ENCODE measurements at regions of chr20 and their contacts with region 1.

Region 1: GRCh38 chr20:34350095-34350494 is 13.0 kb upstream of the ITCH start:
- DNase-seq: no peak
- ATAC-seq: no peak
- H3K4me3 ChIP-seq: no peak overlapping the region
- H3K27ac ChIP-seq: peak overlapping the region; percentile 4; the same call in 1 of the 2 replicates
- H3K4me1 ChIP-seq: peaks cover 19 to 43% of the 10 kb centered on the region in 2 experiments
- H3K27me3 ChIP-seq: no peaks in the 10 kb centered on the region
- CTCF ChIP-seq: no peak
- POLR2A ChIP-seq: no peak
- RAD21 ChIP-seq: no peak

Region 2: GRCh38 chr20:33984182-33984719 is 365.8 kb before region 1 on chr20:
- CTCF ChIA-PET with region 1: no interaction called
- POLR2A ChIA-PET with region 1: no interaction called
- RAD21 ChIA-PET with region 1: no interaction called
- intact Hi-C with region 1: no loop called
- DNase-seq: no peak
- ATAC-seq: no peak
- H3K4me3 ChIP-seq: no peak overlapping the region
- H3K27ac ChIP-seq: no peak overlapping the region
- H3K4me1 ChIP-seq: no peaks in the 10 kb centered on the region
- H3K27me3 ChIP-seq: no peaks in the 10 kb centered on the region
- CTCF ChIP-seq: no peak
- POLR2A ChIP-seq: no peak
- RAD21 ChIP-seq: no peak

Region 3: GRCh38 chr20:34363062-34363464 is 13.0 kb after region 1 on chr20 and contains the start of gene ITCH:
- CTCF ChIA-PET with region 1: interaction called, 4 read pairs
- POLR2A ChIA-PET with region 1: interaction called, 12 read pairs
- RAD21 ChIA-PET with region 1: interaction called in 1 of 2 experiments, 3 read pairs
- intact Hi-C with region 1: no loop called
- DNase-seq: peak; percentile 88
- ATAC-seq: peak; percentile 97
- H3K4me3 ChIP-seq: peak within 1 kb of the TSS; percentile 86 to 87
- H3K27ac ChIP-seq: peak within 1 kb of the TSS; percentile 82
- H3K4me1 ChIP-seq: peaks cover 22 to 62% of the 10 kb centered on the region in 2 experiments
- H3K27me3 ChIP-seq: no peaks in the 10 kb centered on the region
- CTCF ChIP-seq: no peak
- POLR2A ChIP-seq: peak; percentile 79
- RAD21 ChIP-seq: no peak
- total RNA-seq, gene ITCH: 78.8 TPM

Region 4: DNA sequence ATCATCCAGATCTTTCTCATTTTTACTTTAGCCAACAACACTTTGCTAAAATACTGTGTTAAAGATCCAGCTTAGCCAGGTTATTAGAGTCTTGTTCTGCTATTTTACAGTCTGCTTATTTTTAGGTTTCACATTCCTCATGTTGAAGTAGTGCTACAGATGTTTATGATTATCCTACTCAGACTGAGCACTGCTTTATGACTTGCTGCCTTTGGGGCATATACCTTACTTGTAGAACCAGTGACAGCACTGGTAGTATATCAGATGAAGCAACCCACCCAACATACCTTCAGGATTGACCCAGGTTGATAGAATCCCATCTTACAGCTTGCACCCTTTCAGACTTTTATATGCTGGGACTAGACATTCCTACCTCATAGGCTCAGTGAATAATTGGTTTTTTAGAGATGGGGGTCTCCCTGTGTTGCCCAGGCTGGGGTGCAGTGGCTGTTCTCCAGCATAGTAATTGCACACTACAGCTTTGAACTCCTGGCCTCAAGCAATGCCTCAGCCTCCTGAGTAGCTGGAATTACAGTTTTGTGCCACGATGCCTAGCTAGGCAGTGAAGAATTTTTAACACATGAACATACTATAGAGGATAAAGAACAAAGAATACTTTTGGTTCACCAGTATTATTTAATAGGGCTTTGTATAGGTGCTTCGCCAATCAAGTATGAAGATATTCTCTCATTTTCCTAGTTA is 102.3 kb after region 1 on chr20:
- CTCF ChIA-PET with region 1: no interaction called
- POLR2A ChIA-PET with region 1: no interaction called
- RAD21 ChIA-PET with region 1: no interaction called
- intact Hi-C with region 1: no loop called
- DNase-seq: no peak
- ATAC-seq: no peak
- H3K4me3 ChIP-seq: no peak overlapping the region
- H3K27ac ChIP-seq: no peak overlapping the region
- H3K4me1 ChIP-seq: no peaks in the 10 kb centered on the region
- H3K27me3 ChIP-seq: no peaks in the 10 kb centered on the region
- CTCF ChIP-seq: no peak
- POLR2A ChIP-seq: no peak
- RAD21 ChIP-seq: no peak

Region 5: DNA sequence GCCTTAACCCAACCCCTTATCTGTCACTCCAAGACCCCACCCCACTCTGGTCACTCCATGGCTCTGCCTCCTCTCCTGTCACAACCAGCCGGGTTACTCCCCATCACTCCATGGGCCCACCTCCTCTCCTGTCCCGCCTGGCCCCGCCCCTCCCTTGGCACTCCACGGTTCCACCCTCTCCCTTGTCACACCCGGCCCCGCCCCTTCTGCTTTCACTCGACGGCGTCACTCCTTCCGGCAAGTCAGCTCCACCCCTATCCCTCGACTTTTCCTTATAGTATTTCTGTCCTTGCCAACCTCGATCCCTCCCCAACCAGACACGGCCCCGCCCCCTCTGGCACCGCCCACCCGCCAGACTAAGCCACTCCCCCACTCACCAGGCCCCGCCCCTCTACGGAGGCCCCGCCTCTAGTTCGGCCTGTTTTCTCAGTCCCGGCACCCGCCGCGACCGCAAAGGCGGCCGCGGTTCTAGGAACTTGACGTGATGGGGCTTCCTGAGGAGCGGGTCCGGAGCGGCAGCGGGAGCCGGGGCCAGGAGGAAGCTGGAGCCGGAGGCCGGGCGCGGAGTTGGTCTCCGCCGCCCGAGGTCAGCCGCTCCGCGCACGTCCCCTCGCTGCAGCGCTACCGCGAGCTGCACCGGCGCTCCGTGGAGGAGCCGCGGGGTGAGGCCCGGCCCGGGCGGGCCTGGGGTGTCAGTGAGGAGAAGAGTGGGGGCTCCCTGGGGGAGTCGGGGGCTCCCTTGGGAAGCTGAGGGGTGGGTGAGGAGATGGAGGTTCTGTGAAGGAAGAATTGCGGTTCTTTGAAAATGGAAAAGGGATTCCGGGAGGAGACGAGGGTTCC is 526.3 kb after region 1 on chr20 and contains the start of gene ACSS2:
- CTCF ChIA-PET with region 1: no interaction called
- POLR2A ChIA-PET with region 1: no interaction called
- RAD21 ChIA-PET with region 1: no interaction called
- intact Hi-C with region 1: no loop called
- DNase-seq: peak; percentile 98
- ATAC-seq: peak; percentile 90
- H3K4me3 ChIP-seq: peak within 1 kb of the TSS; percentile 76 to 80
- H3K27ac ChIP-seq: peak within 1 kb of the TSS; percentile 57
- H3K4me1 ChIP-seq: peaks cover 23 to 50% of the 10 kb centered on the region in 2 experiments
- H3K27me3 ChIP-seq: no peaks in the 10 kb centered on the region
- CTCF ChIP-seq: no peak
- POLR2A ChIP-seq: peak; percentile 31
- RAD21 ChIP-seq: no peak
- total RNA-seq, gene ACSS2: 71.7 TPM

Measured in HCT116 (cell line).